ENCODE measurements at regions of chr1 and their contacts with region 1.

Region 1: GRCh38 chr1:211133836-211134669 is at the start of gene KCNH1:
- DNase-seq: peak; percentile 76
- ATAC-seq: peak; percentile 85
- H3K4me3 ChIP-seq: peak within 1 kb of the TSS; percentile 52
- H3K27ac ChIP-seq: no peak within 1 kb of the TSS
- H3K4me1 ChIP-seq: 0 out of 2 replicates have a peak, but pooled peaks cover 4% of the 10 kb centered on the region
- H3K27me3 ChIP-seq: peaks cover 78% of the 10 kb centered on the region
- CTCF ChIP-seq: peak; percentile 94
- total RNA-seq, gene KCNH1: not detected in 2 replicates

Region 2: GRCh38 chr1:210407207-210407886 is 726.7 kb before region 1 on chr1:
- CTCF ChIA-PET with region 1: no interaction called
- POLR2A ChIA-PET with region 1: no interaction called
- intact Hi-C with region 1: loop called (anchors 1 kb)
- DNase-seq: peak; percentile 90
- ATAC-seq: peak; percentile 95
- H3K4me3 ChIP-seq: no peak overlapping the region
- H3K27ac ChIP-seq: no peak overlapping the region
- H3K4me1 ChIP-seq: no peaks in the 10 kb centered on the region
- H3K27me3 ChIP-seq: no peaks in the 10 kb centered on the region
- CTCF ChIP-seq: peak; percentile 99

Region 3: DNA sequence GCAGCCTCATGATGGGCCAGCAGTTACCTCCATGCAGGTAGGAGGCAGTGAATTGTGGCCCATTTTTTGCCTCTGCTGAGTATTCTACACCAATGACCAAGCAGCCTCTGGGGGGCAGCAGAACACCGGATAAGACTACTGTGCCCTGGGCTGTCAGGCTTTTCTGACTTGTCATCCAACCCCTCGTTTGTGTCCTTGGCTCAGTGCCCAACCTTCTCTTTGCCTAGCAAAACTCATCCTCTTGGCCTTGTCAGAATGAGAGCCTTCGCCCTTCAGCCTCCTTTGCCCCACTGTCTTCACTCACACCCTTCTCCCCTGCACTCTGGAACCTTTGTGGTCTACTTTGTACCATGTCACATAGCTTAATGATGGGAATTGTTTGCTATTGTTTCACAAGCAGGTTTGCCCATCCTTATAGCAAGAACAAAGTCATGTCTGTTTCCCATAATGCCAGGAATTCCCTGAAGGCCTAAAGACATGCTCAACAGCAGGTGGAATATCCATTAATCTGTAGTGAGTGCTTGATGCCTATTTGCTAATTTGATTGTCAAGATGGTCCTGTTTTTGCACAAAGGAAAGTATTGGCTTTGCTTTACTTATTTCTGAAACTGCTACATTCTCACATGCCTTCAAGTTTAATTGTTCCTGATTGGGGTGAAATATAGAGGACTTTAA is 549.5 kb before region 1 on chr1:
- CTCF ChIA-PET with region 1: no interaction called
- POLR2A ChIA-PET with region 1: no interaction called
- intact Hi-C with region 1: loop called (anchors 1 kb)
- DNase-seq: peak; percentile 93
- ATAC-seq: peak; percentile 97
- H3K4me3 ChIP-seq: no peak overlapping the region
- H3K27ac ChIP-seq: no peak overlapping the region
- H3K4me1 ChIP-seq: no peaks in the 10 kb centered on the region
- H3K27me3 ChIP-seq: peaks cover 4% of the 10 kb centered on the region; the same call in 1 of the 2 replicates
- CTCF ChIP-seq: peak; percentile 92

Region 4: GRCh38 chr1:210597555-210598134 is 536.4 kb before region 1 on chr1:
- CTCF ChIA-PET with region 1: no interaction called
- POLR2A ChIA-PET with region 1: no interaction called
- intact Hi-C with region 1: loop called (anchors 5 kb)
- DNase-seq: peak; percentile 89
- ATAC-seq: peak; percentile 93
- H3K4me3 ChIP-seq: no peak overlapping the region
- H3K27ac ChIP-seq: peak overlapping the region; percentile 87
- H3K4me1 ChIP-seq: peaks cover 23% of the 10 kb centered on the region
- H3K27me3 ChIP-seq: no peaks in the 10 kb centered on the region
- CTCF ChIP-seq: no peak

Region 5: DNA sequence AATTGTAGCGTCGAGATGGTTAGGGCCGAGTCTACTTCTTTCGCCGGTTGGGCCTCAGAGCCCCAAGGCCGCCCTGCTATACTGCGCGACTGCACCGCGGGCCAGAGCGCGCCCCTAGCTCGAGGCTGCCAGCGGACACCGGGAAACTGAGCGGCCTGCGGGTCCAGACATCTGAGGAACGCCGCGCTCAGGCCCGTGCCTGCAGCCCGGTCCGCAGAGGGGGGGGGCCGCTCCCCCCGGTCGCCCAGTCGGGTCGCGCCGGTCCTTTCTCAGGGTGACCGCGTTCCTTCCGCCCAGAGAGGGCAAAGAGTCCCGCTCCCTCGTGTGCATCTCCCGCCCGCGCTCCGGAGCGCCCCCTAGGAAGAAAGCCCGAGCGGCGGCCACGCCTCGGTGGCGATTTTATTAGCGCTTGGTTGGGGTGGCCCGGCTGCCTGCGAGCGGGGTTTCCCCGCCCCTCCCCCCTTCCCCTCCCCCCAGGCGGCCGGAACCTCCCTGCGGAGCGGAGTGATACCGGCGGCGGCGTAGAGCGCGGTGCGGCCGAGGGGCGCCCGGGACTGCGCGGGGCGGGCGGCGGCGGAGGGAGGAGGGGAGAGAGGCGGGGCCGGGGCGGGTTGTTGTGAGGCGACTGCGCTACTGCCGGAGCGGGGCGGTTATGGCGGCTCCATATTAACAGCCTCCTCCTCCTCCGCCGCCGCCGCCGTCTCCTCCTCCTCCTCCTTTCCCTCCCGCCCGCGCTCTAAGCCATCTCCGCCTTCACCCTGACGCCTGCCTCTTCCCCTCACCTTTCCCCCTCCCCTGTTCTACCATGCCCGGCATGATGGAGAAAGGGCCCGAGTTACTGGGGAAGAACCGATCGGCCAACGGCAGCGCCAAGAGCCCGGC is 124.9 kb after region 1 on chr1 and contains the start of gene RCOR3:
- CTCF ChIA-PET with region 1: no interaction called
- POLR2A ChIA-PET with region 1: no interaction called
- intact Hi-C with region 1: loop called (anchors 2 kb)
- DNase-seq: peak; percentile 89
- ATAC-seq: peak; percentile 70
- H3K4me3 ChIP-seq: peak within 1 kb of the TSS; percentile 98
- H3K27ac ChIP-seq: peak within 1 kb of the TSS; percentile 77
- H3K4me1 ChIP-seq: peaks cover 17% of the 10 kb centered on the region
- H3K27me3 ChIP-seq: no peaks in the 10 kb centered on the region
- CTCF ChIP-seq: peak; percentile 51
- total RNA-seq, gene RCOR3: 12.7 and 20.4 TPM in 2 replicates

Region 6: GRCh38 chr1:211318576-211319280 is 184.7 kb after region 1 on chr1:
- CTCF ChIA-PET with region 1: no interaction called
- POLR2A ChIA-PET with region 1: no interaction called
- intact Hi-C with region 1: no loop called
- DNase-seq: no peak
- ATAC-seq: no peak
- H3K4me3 ChIP-seq: no peak overlapping the region
- H3K27ac ChIP-seq: no peak overlapping the region
- H3K4me1 ChIP-seq: peaks cover 7% of the 10 kb centered on the region
- H3K27me3 ChIP-seq: no peaks in the 10 kb centered on the region
- CTCF ChIP-seq: no peak